ENCODE measurements at regions of chr7 and their contacts with region 1.

Region 1: GRCh38 chr7:129635300-129636029 is 23.9 kb downstream of the NRF1 start:
- DNase-seq: peak; percentile 76 to 85 (median 82)
- ATAC-seq: peak; percentile 100
- H3K4me3 ChIP-seq: no peak overlapping the region
- H3K27ac ChIP-seq: no peak overlapping the region
- H3K4me1 ChIP-seq: no peaks in the 10 kb centered on the region
- H3K27me3 ChIP-seq: no peaks in the 10 kb centered on the region
- CTCF ChIP-seq: peak; percentile 94 to 99 (median 99)
- EP300 ChIP-seq: no peak
- POLR2A ChIP-seq: no peak
- RAD21 ChIP-seq: peak; percentile 88 to 93

Region 2: GRCh38 chr7:129367700-129368388 is 267.6 kb before region 1 on chr7:
- CTCF ChIA-PET with region 1: interaction called, 7 read pairs
- POLR2A ChIA-PET with region 1: interaction called, 3 read pairs
- in situ Hi-C with region 1: loop called (anchors 25 kb)
- intact Hi-C with region 1: loop called (anchors 1 kb)
- DNase-seq: peak; percentile 79 to 91 (median 83)
- ATAC-seq: peak; percentile 96
- H3K4me3 ChIP-seq: 0 out of 2 replicates have a peak overlapping the region, but pooled peaks have one; percentile 0
- H3K27ac ChIP-seq: no peak overlapping the region
- H3K4me1 ChIP-seq: peaks cover 6 to 15% of the 10 kb centered on the region in 2 experiments; a peak in 4 of 5 replicates
- H3K27me3 ChIP-seq: no peaks in the 10 kb centered on the region
- CTCF ChIP-seq: peak; percentile 91 to 99 (median 98)
- EP300 ChIP-seq: no peak
- POLR2A ChIP-seq: no peak
- RAD21 ChIP-seq: peak; percentile 90 to 94

Region 3: DNA sequence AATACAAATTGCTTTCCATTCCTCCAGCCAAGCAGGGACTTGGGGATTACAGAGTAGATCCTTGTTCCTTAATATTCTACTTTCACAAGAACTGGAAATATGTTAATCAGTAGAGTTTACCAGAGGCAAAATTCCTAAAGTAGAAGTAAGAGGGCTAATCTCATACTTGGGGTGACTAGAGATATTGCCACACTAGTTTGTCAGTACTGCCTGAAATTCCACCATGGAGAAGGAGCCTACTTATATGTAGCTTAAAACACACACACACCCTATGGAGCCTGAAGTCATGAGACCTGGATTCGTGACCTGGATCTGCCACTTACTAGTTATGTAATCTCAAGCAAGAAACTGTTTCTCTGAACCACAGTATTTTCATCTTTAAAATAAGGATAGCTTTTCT is 167.4 kb before region 1 on chr7:
- CTCF ChIA-PET with region 1: no interaction called
- POLR2A ChIA-PET with region 1: no interaction called
- in situ Hi-C with region 1: no loop called
- intact Hi-C with region 1: loop called (anchors 2 kb)
- DNase-seq: no peak
- ATAC-seq: no peak
- H3K4me3 ChIP-seq: no peak overlapping the region
- H3K27ac ChIP-seq: no peak overlapping the region
- H3K4me1 ChIP-seq: no peaks in the 10 kb centered on the region
- H3K27me3 ChIP-seq: no peaks in the 10 kb centered on the region
- CTCF ChIP-seq: no peak
- EP300 ChIP-seq: no peak
- POLR2A ChIP-seq: no peak
- RAD21 ChIP-seq: no peak

Region 4: GRCh38 chr7:129482761-129483160 is 152.7 kb before region 1 on chr7:
- CTCF ChIA-PET with region 1: no interaction called
- POLR2A ChIA-PET with region 1: no interaction called
- in situ Hi-C with region 1: no loop called
- intact Hi-C with region 1: no loop called
- DNase-seq: no peak
- ATAC-seq: no peak
- H3K4me3 ChIP-seq: no peak overlapping the region
- H3K27ac ChIP-seq: no peak overlapping the region
- H3K4me1 ChIP-seq: no peaks in the 10 kb centered on the region
- H3K27me3 ChIP-seq: no peaks in the 10 kb centered on the region
- CTCF ChIP-seq: no peak
- EP300 ChIP-seq: no peak
- POLR2A ChIP-seq: no peak
- RAD21 ChIP-seq: no peak

Region 5: GRCh38 chr7:129578829-129579228 is 56.6 kb before region 1 on chr7:
- CTCF ChIA-PET with region 1: interaction called, 3 read pairs
- POLR2A ChIA-PET with region 1: no interaction called
- in situ Hi-C with region 1: no loop called
- intact Hi-C with region 1: loop called (anchors 1 kb)
- DNase-seq: no peak
- ATAC-seq: no peak
- H3K4me3 ChIP-seq: no peak overlapping the region
- H3K27ac ChIP-seq: no peak overlapping the region
- H3K4me1 ChIP-seq: no peaks in the 10 kb centered on the region
- H3K27me3 ChIP-seq: peaks cover 5 to 12% of the 10 kb centered on the region in 2 experiments; a peak in 1 of 5 replicates
- CTCF ChIP-seq: no peak
- EP300 ChIP-seq: no peak
- POLR2A ChIP-seq: no peak
- RAD21 ChIP-seq: no peak

Measured in K562 (cell line).